Heart right ventricle (tissue), 16 donors: ENCODE measurements at regions of chr21 and their contacts with region 1.

Region 1: DNA sequence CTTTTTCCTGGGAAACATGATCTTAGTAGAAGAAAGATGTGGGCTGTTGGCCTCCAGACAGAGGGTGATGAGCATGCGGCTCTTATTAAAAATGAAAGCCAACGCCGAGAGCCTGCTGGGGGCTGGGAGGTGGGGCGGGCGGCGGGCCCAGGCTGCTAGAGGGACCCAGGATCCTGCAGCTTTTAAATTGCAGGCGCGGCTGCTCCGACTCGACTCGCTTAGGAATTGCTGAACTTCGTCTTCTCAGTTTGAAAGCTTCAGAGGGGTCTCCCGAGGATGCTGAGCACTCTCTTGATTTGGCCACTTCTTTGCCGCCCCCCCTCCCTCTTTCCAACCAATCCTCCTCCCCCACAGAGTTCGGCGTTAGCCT is 1.2 kb downstream of the AGPAT3 start:
- DNase-seq: peak; percentile 55 to 58
- ATAC-seq: peak in 7 of 8 donors; percentile 39 to 80 (median 65)
- H3K4me3 ChIP-seq: peak overlapping the region; percentile 58 to 94 (median 85)
- H3K27ac ChIP-seq: peak overlapping the region; percentile 76 to 97 (median 94)
- H3K4me1 ChIP-seq: peaks cover 9 to 62% (median 42%) of the 10 kb centered on the region in 9 donors
- H3K27me3 ChIP-seq: no peaks in the 10 kb centered on the region
- CTCF ChIP-seq: no peak

Region 2: GRCh38 chr21:43697758-43698643 is 168.2 kb before region 1 on chr21:
- intact Hi-C with region 1: no loop called
- DNase-seq: no peak
- ATAC-seq: no peak
- H3K4me3 ChIP-seq: no peak overlapping the region
- H3K27ac ChIP-seq: no peak overlapping the region
- H3K4me1 ChIP-seq: peaks cover 0 to 13% (median 8%) of the 10 kb centered on the region in 9 donors
- H3K27me3 ChIP-seq: no peaks in the 10 kb centered on the region
- CTCF ChIP-seq: no peak

Region 3: GRCh38 chr21:43728467-43729390 is 137.5 kb before region 1 on chr21:
- intact Hi-C with region 1: loop called in 1 of 10 experiments (anchors 10 kb)
- DNase-seq: peak; percentile 94 to 95
- ATAC-seq: peak; percentile 88 to 93 (median 92)
- H3K4me3 ChIP-seq: peak overlapping the region; percentile 50 to 83 (median 63)
- H3K27ac ChIP-seq: peak overlapping the region; percentile 70 to 94 (median 90)
- H3K4me1 ChIP-seq: peaks cover 22 to 92% (median 56%) of the 10 kb centered on the region in 9 donors
- H3K27me3 ChIP-seq: no peaks in the 10 kb centered on the region
- CTCF ChIP-seq: peak in 8 of 9 donors; percentile 39 to 72 (median 54)

Region 4: GRCh38 chr21:43816611-43817478 is 49.4 kb before region 1 on chr21:
- intact Hi-C with region 1: loop called in 2 of 10 experiments (anchors 5 to 10 kb)
- DNase-seq: no peak
- ATAC-seq: peak in 1 of 8 donors; percentile 38
- H3K4me3 ChIP-seq: no peak overlapping the region
- H3K27ac ChIP-seq: no peak overlapping the region
- H3K4me1 ChIP-seq: peaks cover 0 to 42% (median 0%) of the 10 kb centered on the region in 9 donors
- H3K27me3 ChIP-seq: no peaks in the 10 kb centered on the region
- CTCF ChIP-seq: no peak

Region 5: DNA sequence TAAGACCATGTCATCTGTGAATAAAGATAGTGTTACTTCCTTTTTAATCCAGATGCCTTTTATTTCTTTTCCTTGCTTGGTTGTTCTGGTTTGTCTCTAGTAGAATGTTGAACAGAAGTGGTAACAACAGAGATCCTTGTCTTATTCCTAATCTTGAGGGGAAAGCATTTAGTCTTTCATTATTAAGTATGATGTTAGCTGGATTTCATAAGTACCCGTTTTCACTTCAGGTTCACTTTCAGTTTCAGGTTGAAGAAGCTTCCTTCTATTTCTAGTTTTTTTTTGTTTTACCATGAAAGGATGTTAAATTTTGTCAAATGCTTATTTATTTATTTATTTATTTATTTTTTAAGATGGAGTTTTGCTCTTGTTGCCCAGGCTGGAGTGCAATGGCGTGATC is 23.5 kb before region 1 on chr21:
- intact Hi-C with region 1: no loop called
- DNase-seq: no peak
- ATAC-seq: no peak
- H3K4me3 ChIP-seq: no peak overlapping the region
- H3K27ac ChIP-seq: peak overlapping the region in 1 of 10 donors; percentile 40
- H3K4me1 ChIP-seq: peaks cover 0 to 6% (median 0%) of the 10 kb centered on the region in 9 donors
- H3K27me3 ChIP-seq: no peaks in the 10 kb centered on the region
- CTCF ChIP-seq: no peak

Region 6: GRCh38 chr21:43909741-43910486 is 43.7 kb after region 1 on chr21:
- intact Hi-C with region 1: loop called in 1 of 10 experiments (anchors 5 kb)
- DNase-seq: no peak
- ATAC-seq: peak in 4 of 8 donors; percentile 21 to 48 (median 30)
- H3K4me3 ChIP-seq: no peak overlapping the region
- H3K27ac ChIP-seq: no peak overlapping the region
- H3K4me1 ChIP-seq: peaks cover 7 to 57% (median 30%) of the 10 kb centered on the region in 9 donors
- H3K27me3 ChIP-seq: no peaks in the 10 kb centered on the region
- CTCF ChIP-seq: no peak

Region 7: GRCh38 chr21:43929217-43930025 is 63.2 kb after region 1 on chr21:
- intact Hi-C with region 1: loop called in 3 of 10 experiments (anchors 5 to 10 kb)
- DNase-seq: peak; percentile 80 to 83
- ATAC-seq: peak; percentile 85 to 93 (median 88)
- H3K4me3 ChIP-seq: no peak overlapping the region
- H3K27ac ChIP-seq: peak overlapping the region; percentile 26 to 91 (median 86)
- H3K4me1 ChIP-seq: peaks cover 12 to 61% (median 44%) of the 10 kb centered on the region in 9 donors
- H3K27me3 ChIP-seq: no peaks in the 10 kb centered on the region
- CTCF ChIP-seq: peak in 7 of 9 donors; percentile 21 to 51 (median 35)